IMR-90 (cell line): ENCODE measurements at regions of chr5 and their contacts with region 1.

Region 1: DNA sequence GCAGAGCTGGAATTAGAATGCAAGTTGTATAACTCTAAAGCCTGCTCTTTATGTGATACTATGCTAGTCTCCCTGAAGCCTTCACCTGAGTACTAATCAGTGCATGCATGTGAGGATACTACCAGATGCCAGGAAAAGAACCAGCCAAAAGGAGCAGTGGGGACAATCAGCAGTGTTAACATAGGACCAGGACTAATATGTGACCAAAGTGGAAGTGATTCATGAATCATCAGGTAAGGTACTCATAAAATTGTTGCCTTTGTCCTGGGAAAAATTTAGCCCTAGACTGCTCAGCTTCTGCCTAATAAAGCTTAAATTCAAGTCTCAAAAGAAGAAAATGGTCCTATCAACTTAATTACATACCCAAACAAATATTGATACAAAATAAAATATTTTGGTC is 13.4 kb upstream of the TSLP start:
- DNase-seq: no peak
- ATAC-seq: no peak
- H3K4me3 ChIP-seq: no peak overlapping the region
- H3K27ac ChIP-seq: no peak overlapping the region
- H3K4me1 ChIP-seq: no peaks in the 10 kb centered on the region
- H3K27me3 ChIP-seq: no peaks in the 10 kb centered on the region
- CTCF ChIP-seq: no peak
- POLR2A ChIP-seq: no peak
- RAD21 ChIP-seq: no peak

Region 2: GRCh38 chr5:111389390-111390082 is 331.5 kb after region 1 on chr5:
- CTCF ChIA-PET with region 1: no interaction called
- POLR2A ChIA-PET with region 1: no interaction called
- dilution Hi-C with region 1: no loop called
- in situ Hi-C with region 1: no loop called
- intact Hi-C with region 1: loop called (anchors 5 kb)
- DNase-seq: peak; percentile 85
- ATAC-seq: peak; percentile 75
- H3K4me3 ChIP-seq: no peak overlapping the region
- H3K27ac ChIP-seq: no peak overlapping the region
- H3K4me1 ChIP-seq: no peaks in the 10 kb centered on the region
- H3K27me3 ChIP-seq: no peaks in the 10 kb centered on the region
- CTCF ChIP-seq: no peak
- POLR2A ChIP-seq: no peak
- RAD21 ChIP-seq: no peak